CD8-positive, alpha-beta T cell (primary cell): ENCODE measurements at regions of chr3 and their contacts with region 1.

Region 1: DNA sequence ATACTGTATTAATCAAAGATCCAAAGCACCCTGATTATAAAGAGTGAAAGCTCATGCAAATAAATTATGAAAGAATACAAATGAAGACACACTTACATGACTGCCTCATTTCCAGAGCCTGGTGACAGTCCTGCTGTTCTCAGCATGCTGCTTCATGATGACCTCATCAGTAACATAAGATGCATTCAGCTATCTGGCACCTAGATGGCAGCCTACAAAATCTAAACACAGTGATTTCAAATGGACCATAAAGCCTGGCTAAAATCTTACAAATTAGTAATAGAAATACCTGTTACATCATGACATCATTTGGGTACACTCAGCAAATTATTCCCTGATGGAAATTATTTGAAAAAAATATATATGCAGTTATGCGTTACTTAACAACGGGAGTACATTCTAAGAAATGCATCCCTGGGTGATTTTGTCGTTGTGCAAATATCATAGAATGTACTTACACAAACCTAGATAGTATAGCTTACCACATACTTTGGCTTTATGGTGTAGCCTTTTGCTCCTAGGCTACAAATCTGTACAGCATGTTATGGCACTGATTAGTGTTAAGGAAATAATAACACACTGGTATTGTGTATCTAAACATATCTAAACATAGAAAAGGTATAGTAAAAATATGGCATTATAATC is 207.2 kb downstream of the EPHA3 start:
- DNase-seq: no peak
- ATAC-seq: no peak
- H3K4me3 ChIP-seq: no peak overlapping the region
- H3K4me3 Mint-ChIP-seq: no peak overlapping the region
- H3K27ac ChIP-seq: no peak overlapping the region
- H3K27ac Mint-ChIP-seq: no peak overlapping the region
- H3K4me1 ChIP-seq: no peaks in the 10 kb centered on the region
- H3K4me1 Mint-ChIP-seq: no peaks in the 10 kb centered on the region
- H3K27me3 ChIP-seq: no peaks in the 10 kb centered on the region
- H3K27me3 Mint-ChIP-seq: no peaks in the 10 kb centered on the region
- CTCF ChIP-seq: no peak

Region 2: DNA sequence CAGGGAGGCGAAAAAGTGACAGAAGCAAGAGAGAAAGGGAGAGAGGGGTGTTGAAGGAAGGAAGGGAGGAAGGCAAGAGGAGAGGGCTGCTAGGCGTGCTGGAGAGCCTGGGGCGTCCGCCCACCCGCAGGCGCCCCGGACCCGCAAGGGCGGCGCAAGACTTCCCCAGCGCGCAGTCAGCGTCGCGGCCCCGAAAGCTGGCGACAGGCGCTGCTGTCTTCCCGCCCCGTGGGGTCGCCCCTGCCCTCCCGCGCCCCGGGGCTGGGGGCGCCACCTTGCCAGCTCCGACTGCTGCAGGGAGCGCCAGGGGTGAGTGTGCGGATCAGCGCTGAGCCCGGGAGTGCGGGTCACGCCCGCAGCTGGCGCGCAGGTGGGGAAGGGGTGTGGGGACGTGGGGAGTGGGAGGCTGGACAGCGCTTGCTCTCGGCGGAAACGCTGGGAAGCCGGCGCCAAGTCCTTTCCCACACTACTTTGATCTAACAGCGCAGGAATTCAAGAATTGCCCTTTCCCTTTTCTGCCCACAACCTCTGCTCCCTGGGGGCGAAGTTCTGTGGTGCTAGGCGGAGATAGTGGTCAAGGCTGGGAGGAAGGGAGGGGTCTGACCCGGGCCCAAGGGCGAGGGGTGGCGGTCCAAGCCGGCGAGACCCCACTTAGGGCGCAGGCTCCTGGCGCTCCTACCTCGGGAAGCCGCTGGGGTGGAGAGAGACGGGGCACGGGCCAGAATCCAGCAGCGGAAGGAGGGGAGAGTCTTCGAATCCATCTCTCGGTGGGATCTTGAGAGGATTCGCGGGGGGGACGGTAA is 1521.8 kb before region 1 on chr3:
- CTCF ChIA-PET with region 1: no interaction called
- POLR2A ChIA-PET with region 1: no interaction called
- intact Hi-C with region 1: loop called in 1 of 2 experiments (anchors 10 kb)
- DNase-seq: peak in 2 of 9 experiments; percentile 2 to 5
- ATAC-seq: no peak
- H3K4me3 ChIP-seq: peak within 1 kb of the TSS in 1 of 2 experiments; percentile 13
- H3K4me3 Mint-ChIP-seq: peak within 1 kb of the TSS; percentile 65
- H3K27ac ChIP-seq: no peak within 1 kb of the TSS
- H3K27ac Mint-ChIP-seq: no peak within 1 kb of the TSS
- H3K4me1 ChIP-seq: peaks cover 4% of the 10 kb centered on the region
- H3K4me1 Mint-ChIP-seq: peaks cover 28% of the 10 kb centered on the region
- H3K27me3 ChIP-seq: peaks cover 0 to 4% of the 10 kb centered on the region in 2 experiments
- H3K27me3 Mint-ChIP-seq: peaks cover 62% of the 10 kb centered on the region
- CTCF ChIP-seq: no peak